Activated B cell treated with CpG ODN at 0.5 μM for 24 hours (primary cell): ENCODE measurements at regions of chr19 and their contacts with region 1.

Region 1: GRCh38 chr19:1087813-1088415 is 7.3 kb downstream of the POLR2E start:
- DNase-seq: peak; percentile 45
- ATAC-seq: peak; percentile 64
- H3K4me3 Mint-ChIP-seq: peak overlapping the region; percentile 66
- H3K27ac Mint-ChIP-seq: peak overlapping the region; percentile 92
- H3K4me1 Mint-ChIP-seq: peaks cover 46% of the 10 kb centered on the region
- H3K27me3 Mint-ChIP-seq: no peaks in the 10 kb centered on the region
- CTCF ChIP-seq: no peak

Region 2: DNA sequence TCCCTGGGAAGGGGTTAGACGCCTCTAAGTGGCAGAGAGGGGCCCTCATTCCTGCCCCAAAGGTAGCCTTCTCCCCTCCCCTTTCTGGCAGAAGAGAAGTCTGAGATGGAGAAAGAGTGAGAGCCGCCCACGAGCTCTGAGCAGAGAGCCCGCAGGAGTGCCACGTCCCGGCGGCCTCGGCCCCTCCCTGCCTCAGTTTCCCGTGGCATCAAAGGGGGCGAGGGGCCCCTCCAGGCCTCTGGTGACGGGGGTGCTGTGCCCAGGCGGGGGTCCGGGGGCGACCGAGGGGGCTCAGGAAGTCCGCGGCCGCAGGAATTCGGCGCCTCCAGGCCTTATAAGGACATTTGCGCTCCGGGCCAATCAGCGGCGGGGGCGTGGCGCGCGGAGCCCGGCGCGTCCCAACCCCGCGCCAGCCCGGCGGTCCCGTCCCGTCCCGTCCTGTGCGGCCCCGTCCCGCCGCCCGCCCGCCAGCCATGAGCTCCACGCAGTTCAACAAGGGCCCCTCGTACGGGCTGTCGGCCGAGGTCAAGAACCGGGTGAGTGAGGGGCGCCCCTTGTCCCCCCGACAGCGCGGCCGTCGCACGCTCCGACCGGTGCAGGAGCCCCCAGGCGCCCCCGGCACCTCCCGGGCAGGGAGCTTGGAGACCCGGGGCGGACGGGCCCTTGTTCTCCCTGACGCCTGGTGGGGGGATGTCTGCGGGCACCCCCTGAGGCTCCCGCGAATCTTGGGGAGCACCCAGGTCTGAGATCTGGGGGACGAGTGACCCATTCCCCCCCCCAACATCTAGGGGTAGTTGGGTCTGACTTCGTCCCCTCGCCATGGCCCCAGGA is 61.5 kb before region 1 on chr19 and contains the start of gene CNN2:
- CTCF ChIA-PET with region 1: interaction called, 6 read pairs
- POLR2A ChIA-PET with region 1: interaction called, 26 read pairs
- intact Hi-C with region 1: no loop called
- DNase-seq: peak; percentile 76
- ATAC-seq: peak; percentile 61
- H3K4me3 Mint-ChIP-seq: peak within 1 kb of the TSS; percentile 95
- H3K27ac Mint-ChIP-seq: peak within 1 kb of the TSS; percentile 91
- H3K4me1 Mint-ChIP-seq: peaks cover 29% of the 10 kb centered on the region
- H3K27me3 Mint-ChIP-seq: no peaks in the 10 kb centered on the region
- CTCF ChIP-seq: no peak
- total RNA-seq, gene CNN2: 352 and 371 TPM in 2 replicates

Region 3: DNA sequence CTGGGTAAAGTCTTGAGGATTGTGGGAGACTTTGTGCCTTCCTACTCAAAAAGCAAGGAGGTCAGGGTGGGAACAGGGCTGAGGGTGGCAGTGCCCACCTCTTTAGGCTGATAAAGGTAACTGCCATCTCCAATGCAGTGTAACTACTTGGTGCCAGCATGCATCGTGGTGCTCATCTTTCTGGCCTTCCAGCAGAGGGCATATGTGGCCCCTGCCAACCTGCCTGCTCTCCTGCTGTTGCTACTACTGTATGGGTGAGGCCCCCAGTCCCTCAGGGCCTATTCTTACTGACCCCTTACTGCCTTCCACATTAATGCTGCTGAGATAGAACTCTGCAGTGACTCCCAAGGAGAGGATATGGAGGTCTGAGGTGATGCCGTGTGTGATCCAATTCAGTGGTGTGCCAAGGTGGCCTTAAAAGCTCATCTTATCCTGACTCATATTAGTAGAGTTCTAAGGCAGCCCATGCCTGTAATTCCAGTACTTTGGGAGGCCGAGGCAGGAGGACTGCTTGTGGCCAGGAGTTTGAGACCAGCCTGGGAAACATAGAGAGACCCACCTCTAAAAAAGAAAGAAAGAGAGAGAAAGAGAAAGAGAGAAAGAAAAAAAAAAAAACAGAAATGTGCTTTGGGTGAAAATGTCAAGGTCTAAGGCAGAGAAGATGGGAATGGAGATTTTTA is 30.6 kb before region 1 on chr19:
- CTCF ChIA-PET with region 1: interaction called, 13 read pairs
- POLR2A ChIA-PET with region 1: interaction called, 16 read pairs
- intact Hi-C with region 1: loop called (anchors 2 kb)
- DNase-seq: no peak
- ATAC-seq: peak; percentile 70
- H3K4me3 Mint-ChIP-seq: no peak overlapping the region
- H3K27ac Mint-ChIP-seq: peak overlapping the region; percentile 83
- H3K4me1 Mint-ChIP-seq: peaks cover 23% of the 10 kb centered on the region
- H3K27me3 Mint-ChIP-seq: no peaks in the 10 kb centered on the region
- CTCF ChIP-seq: no peak